Spleen (tissue), 13 donors: ENCODE measurements at regions of chr13 and their contacts with region 1.

Region 1: GRCh38 chr13:99442273-99442895 is 58.9 kb upstream of the TM9SF2 start:
- DNase-seq: no peak
- H3K4me3 ChIP-seq: no peak overlapping the region
- H3K27ac ChIP-seq: no peak overlapping the region
- H3K4me1 ChIP-seq: peaks cover 0 to 19% (median 3%) of the 10 kb centered on the region in 6 donors
- H3K27me3 ChIP-seq: peaks cover 0 to 8% (median 0%) of the 10 kb centered on the region in 7 donors
- CTCF ChIP-seq: peak; percentile 71 to 97 (median 95)
- POLR2A ChIP-seq: no peak

Region 2: GRCh38 chr13:99501184-99501847 is 58.9 kb after region 1 on chr13 and contains the start of gene TM9SF2:
- intact Hi-C with region 1: loop called (anchors 5 kb)
- DNase-seq: peak; percentile 98
- H3K4me3 ChIP-seq: peak within 1 kb of the TSS; percentile 65 to 95 (median 87)
- H3K27ac ChIP-seq: peak within 1 kb of the TSS; percentile 78 to 98 (median 93)
- H3K4me1 ChIP-seq: peaks cover 49 to 90% (median 83%) of the 10 kb centered on the region in 6 donors
- H3K27me3 ChIP-seq: no peaks in the 10 kb centered on the region
- CTCF ChIP-seq: peak in 1 of 11 experiments; percentile 17
- POLR2A ChIP-seq: peak in 2 of 3 donors; percentile 30 to 61
- total RNA-seq, gene TM9SF2: 82.7 to 134 (median 103) TPM

Region 3: GRCh38 chr13:99614385-99614885 is 172.1 kb after region 1 on chr13:
- intact Hi-C with region 1: loop called (anchors 5 kb)
- DNase-seq: no peak
- H3K4me3 ChIP-seq: no peak overlapping the region
- H3K27ac ChIP-seq: no peak overlapping the region
- H3K4me1 ChIP-seq: peaks cover 0 to 20% (median 8%) of the 10 kb centered on the region in 6 donors
- H3K27me3 ChIP-seq: no peaks in the 10 kb centered on the region
- CTCF ChIP-seq: peak in 5 of 11 experiments; percentile 13 to 40 (median 22)
- POLR2A ChIP-seq: no peak